Natural killer cell (primary cell): ENCODE measurements at regions of chr14 and their contacts with region 1.

Region 1: GRCh38 chr14:59464486-59465315 is 479 bp downstream of the GPR135 start:
- DNase-seq: peak; percentile 50 to 72
- ATAC-seq: peak; percentile 71 to 79 (median 72)
- H3K4me3 ChIP-seq: peak overlapping the region; percentile 52
- H3K4me3 Mint-ChIP-seq: peak overlapping the region; percentile 90
- H3K27ac ChIP-seq: no peak overlapping the region
- H3K27ac Mint-ChIP-seq: peak overlapping the region in 1 of 2 donors; percentile 79
- H3K4me1 ChIP-seq: peaks cover 13% of the 10 kb centered on the region
- H3K4me1 Mint-ChIP-seq: peaks cover 7 to 19% of the 10 kb centered on the region in 2 donors
- H3K27me3 ChIP-seq: peaks cover 6% of the 10 kb centered on the region
- H3K27me3 Mint-ChIP-seq: peaks cover 4 to 9% of the 10 kb centered on the region in 2 donors
- CTCF ChIP-seq: no peak

Region 2: GRCh38 chr14:59483900-59484638 is 19.4 kb after region 1 on chr14 and contains the starts of genes JKAMP and L3HYPDH:
- intact Hi-C with region 1: loop called (anchors 1 kb)
- DNase-seq: peak; percentile 97 to 98
- ATAC-seq: peak; percentile 93 to 96 (median 94)
- H3K4me3 ChIP-seq: peak within 1 kb of the TSS; percentile 80
- H3K4me3 Mint-ChIP-seq: peak within 1 kb of the TSS; percentile 93
- H3K27ac ChIP-seq: peak within 1 kb of the TSS; percentile 62
- H3K27ac Mint-ChIP-seq: peak within 1 kb of the TSS; percentile 86
- H3K4me1 ChIP-seq: peaks cover 24% of the 10 kb centered on the region
- H3K4me1 Mint-ChIP-seq: peaks cover 46 to 58% of the 10 kb centered on the region in 2 donors
- H3K27me3 ChIP-seq: no peaks in the 10 kb centered on the region
- H3K27me3 Mint-ChIP-seq: no peaks in the 10 kb centered on the region
- CTCF ChIP-seq: peak; percentile 38
- total RNA-seq, gene JKAMP: 18.8 to 25.0 (median 20.5) TPM
- total RNA-seq, gene L3HYPDH: 13.3 to 18.8 (median 16.5) TPM